Naive thymus-derived CD8-positive, alpha-beta T cell (primary cell): ENCODE measurements at regions of chr9 and their contacts with region 1.

Region 1: GRCh38 chr9:137223078-137223970 is 1.3 kb upstream of the RNF208 start:
- DNase-seq: peak; percentile 95 to 100 (median 98)
- ATAC-seq: peak; percentile 90 to 93
- H3K4me3 Mint-ChIP-seq: peak overlapping the region; percentile 73 to 89 (median 82)
- H3K27ac Mint-ChIP-seq: peak overlapping the region; percentile 60 to 92 (median 82)
- H3K4me1 Mint-ChIP-seq: peaks cover 5 to 14% (median 12%) of the 10 kb centered on the region in 4 donors
- H3K27me3 Mint-ChIP-seq: peaks cover 2 to 10% (median 3%) of the 10 kb centered on the region in 5 donors

Region 2: DNA sequence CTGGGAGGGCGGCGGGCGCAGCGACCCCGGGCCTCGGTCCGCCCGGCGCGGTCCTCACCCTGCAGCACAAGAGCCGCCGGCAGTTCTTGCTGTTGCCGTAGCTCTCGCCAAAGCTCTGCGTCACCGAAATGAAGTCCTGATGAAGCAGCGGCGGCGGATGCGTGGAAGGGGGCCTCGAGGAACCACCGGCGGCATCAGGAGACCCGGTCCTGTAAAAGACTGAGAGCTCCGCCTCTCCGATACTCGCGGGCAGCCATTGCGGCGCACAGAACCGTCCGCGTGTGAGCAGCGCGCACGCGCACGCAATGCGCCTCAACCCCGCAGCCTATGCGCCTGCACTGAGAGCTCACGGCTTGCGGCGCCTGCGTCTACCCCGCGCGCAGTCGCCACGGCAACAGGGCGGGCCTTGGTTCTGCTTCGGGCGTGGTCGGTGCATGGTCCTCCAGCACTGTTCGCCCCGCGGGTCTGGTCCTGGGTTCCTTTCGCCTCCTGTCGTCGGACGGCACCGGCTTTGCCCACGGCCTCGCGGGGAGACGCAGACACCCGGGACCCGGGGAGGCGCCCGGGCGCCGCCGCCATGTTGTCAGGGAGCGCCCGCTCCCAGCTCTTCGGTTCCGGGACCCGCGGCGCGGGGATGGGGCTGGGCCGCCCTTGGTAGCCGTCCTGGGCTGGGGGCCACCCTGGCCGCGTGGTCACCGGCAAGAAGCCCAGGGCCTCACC is 93.7 kb before region 1 on chr9:
- POLR2A ChIA-PET with region 1: interaction called, 34 read pairs
- DNase-seq: peak; percentile 82 to 93 (median 88)
- ATAC-seq: peak; percentile 92 to 95
- H3K4me3 Mint-ChIP-seq: peak overlapping the region; percentile 78 to 95 (median 88)
- H3K27ac Mint-ChIP-seq: peak overlapping the region; percentile 71 to 94 (median 84)
- H3K4me1 Mint-ChIP-seq: peaks cover 17 to 30% (median 28%) of the 10 kb centered on the region in 4 donors
- H3K27me3 Mint-ChIP-seq: peaks cover 0 to 10% (median 2%) of the 10 kb centered on the region in 5 donors

Region 3: GRCh38 chr9:137200311-137201204 is 22.8 kb before region 1 on chr9 and contains the start of gene TPRN:
- POLR2A ChIA-PET with region 1: interaction called, 85 read pairs
- DNase-seq: peak; percentile 94 to 99 (median 98)
- ATAC-seq: peak; percentile 93 to 95
- H3K4me3 Mint-ChIP-seq: peak within 1 kb of the TSS; percentile 76 to 92 (median 85)
- H3K27ac Mint-ChIP-seq: peak within 1 kb of the TSS; percentile 48 to 90 (median 80)
- H3K4me1 Mint-ChIP-seq: peaks cover 9 to 39% (median 22%) of the 10 kb centered on the region in 4 donors
- H3K27me3 Mint-ChIP-seq: no peaks in the 10 kb centered on the region
- polyA plus RNA-seq, gene TPRN: 0.15 to 0.42 (median 0.39) TPM

Region 4: DNA sequence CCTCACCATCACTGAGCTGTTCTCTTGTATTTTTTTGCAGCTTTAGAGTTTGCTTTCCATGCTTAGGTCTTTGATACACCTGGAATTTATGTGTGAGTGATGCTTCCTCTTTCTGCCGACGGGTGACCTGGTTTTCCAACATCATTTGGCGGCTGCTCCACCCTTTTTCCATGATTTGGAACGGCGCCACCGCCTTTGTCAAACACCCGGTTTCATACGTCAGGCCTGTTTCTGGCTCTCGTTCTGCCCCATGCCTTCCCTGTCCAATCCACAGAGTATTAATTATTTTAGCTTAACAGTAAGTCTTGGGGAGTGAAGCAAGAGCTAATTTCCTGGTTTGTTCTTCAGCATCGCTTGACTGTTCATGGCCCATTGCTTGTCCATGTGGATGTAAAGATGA is 684.5 kb after region 1 on chr9:
- POLR2A ChIA-PET with region 1: no interaction called
- DNase-seq: no peak
- ATAC-seq: no peak
- H3K4me3 Mint-ChIP-seq: no peak overlapping the region
- H3K27ac Mint-ChIP-seq: no peak overlapping the region
- H3K4me1 Mint-ChIP-seq: no peaks in the 10 kb centered on the region
- H3K27me3 Mint-ChIP-seq: peaks cover 24 to 44% (median 32%) of the 10 kb centered on the region in 5 donors